Activated T-helper 1 cell treated with anti-CD3 and anti-CD28 coated beads, Interleukin-12 subunit alpha, Interleukin-12 subunit beta, Interleukin-2, Interleukin-4 antibody, amounts not matched to agents 30 ng/mL and 10 ng/mL and 1 ng/mL, durations not matched to agents 14 hours and 24 hours and 36 hours (primary cell): ENCODE measurements at regions of chr19 and their contacts with region 1.

Region 1: GRCh38 chr19:6501740-6502648 is at the start of gene TUBB4A:
- DNase-seq: peak; percentile 31
- H3K4me3 Mint-ChIP-seq: peak within 1 kb of the TSS; percentile 82
- H3K27ac Mint-ChIP-seq: no peak within 1 kb of the TSS
- H3K4me1 Mint-ChIP-seq: peaks cover 21% of the 10 kb centered on the region
- H3K27me3 Mint-ChIP-seq: peaks cover 18% of the 10 kb centered on the region
- total RNA-seq, gene TUBB4A: 2.3 and 3.0 TPM in 2 replicates

Region 2: DNA sequence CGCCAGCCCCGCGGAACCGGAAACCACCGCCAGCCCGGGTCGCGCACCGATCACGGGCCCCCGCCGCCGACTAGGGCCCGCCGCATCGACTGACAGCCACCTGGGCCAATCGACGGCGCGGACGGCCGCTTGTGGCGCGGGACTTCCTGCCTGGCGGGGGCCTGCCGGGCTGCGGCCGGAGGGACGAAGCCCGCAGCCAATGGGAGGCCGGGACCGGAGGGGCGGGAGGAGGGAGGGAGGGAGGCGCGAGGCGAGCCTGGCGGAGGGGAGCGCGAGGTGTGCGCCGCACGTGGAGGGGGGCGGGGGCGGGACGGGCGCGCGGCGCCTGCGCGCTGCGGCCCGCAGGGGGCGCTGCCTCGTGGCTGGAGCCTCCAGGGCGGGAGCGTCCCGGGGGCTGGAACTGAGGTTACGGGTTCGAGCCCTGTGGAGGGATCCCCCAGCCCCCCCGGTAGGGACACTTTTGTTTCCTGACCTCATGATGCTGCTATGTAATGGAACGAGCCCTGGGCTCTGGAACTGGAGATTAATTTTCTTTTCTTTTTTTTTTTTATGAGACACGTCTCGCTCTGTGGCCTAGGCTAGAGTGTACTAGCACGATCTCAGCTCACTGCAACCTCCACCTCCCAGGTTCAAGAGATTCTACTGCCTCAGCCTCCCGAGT is 221.9 kb before region 1 on chr19 and contains the start of gene MLLT1:
- intact Hi-C with region 1: loop called (anchors 1 kb)
- DNase-seq: peak; percentile 96
- H3K4me3 Mint-ChIP-seq: peak within 1 kb of the TSS; percentile 95
- H3K27ac Mint-ChIP-seq: peak within 1 kb of the TSS; percentile 90
- H3K4me1 Mint-ChIP-seq: peaks cover 26% of the 10 kb centered on the region
- H3K27me3 Mint-ChIP-seq: no peaks in the 10 kb centered on the region
- total RNA-seq, gene MLLT1: 71.6 and 77.4 TPM in 2 replicates

Region 3: DNA sequence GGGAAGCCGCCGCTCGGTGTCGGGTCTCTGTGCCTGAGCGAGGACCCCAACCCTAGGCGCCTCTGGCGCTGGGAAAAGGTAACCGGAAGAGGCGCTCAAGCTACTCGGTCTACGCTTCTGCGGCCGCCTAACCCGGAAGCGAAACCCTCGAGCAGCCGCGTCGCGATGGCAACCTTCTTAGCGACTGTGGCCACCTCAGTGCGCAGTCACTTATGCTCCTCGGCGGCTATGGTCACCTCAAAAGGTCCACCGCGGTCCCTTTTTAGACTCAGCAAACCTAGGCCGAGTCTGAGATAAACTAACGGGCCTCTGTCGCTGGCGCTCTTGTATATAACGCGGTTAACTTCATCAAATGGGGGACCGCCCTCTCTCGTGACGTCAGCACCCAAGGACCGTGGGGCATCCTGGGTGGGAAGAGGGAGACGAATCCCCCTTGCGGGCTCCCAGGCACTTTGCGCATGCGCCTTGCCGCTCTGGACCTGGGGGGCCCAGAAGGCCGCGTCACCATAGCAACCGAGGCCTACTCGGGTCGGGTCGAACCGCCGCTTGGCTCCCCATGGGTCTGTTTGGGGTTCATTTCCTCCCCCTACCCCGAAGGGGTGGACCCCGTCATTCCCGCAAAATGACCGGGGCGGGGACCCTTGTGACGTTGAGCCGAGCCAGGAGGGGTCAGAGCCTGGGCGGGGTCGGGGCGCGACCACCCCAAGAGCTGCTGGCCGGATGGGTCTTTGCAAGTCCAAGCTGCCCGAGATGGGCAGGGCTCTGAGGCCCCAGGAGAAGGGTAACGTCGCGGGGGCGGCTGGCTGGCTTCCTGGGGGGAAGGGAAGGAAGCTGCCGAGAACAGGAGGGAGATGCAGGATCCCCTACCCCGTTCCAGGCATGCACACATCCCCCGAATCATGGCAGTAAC is 108.7 kb before region 1 on chr19 and contains the start of gene GTF2F1:
- intact Hi-C with region 1: loop called (anchors 2 kb)
- DNase-seq: peak; percentile 87
- H3K4me3 Mint-ChIP-seq: peak within 1 kb of the TSS; percentile 98
- H3K27ac Mint-ChIP-seq: peak within 1 kb of the TSS; percentile 97
- H3K4me1 Mint-ChIP-seq: peaks cover 29% of the 10 kb centered on the region
- H3K27me3 Mint-ChIP-seq: no peaks in the 10 kb centered on the region
- total RNA-seq, gene GTF2F1: 62.9 and 65.5 TPM in 2 replicates

Region 4: GRCh38 chr19:6453951-6454565 is 47.9 kb before region 1 on chr19:
- intact Hi-C with region 1: no loop called
- DNase-seq: no peak
- H3K4me3 Mint-ChIP-seq: no peak overlapping the region
- H3K27ac Mint-ChIP-seq: no peak overlapping the region
- H3K4me1 Mint-ChIP-seq: peaks cover 16% of the 10 kb centered on the region
- H3K27me3 Mint-ChIP-seq: no peaks in the 10 kb centered on the region

Region 5: GRCh38 chr19:6481541-6482342 is 20.3 kb before region 1 on chr19 and contains the start of gene DENND1C:
- intact Hi-C with region 1: loop called (anchors 2 kb)
- DNase-seq: peak; percentile 61
- H3K4me3 Mint-ChIP-seq: peak within 1 kb of the TSS; percentile 91
- H3K27ac Mint-ChIP-seq: peak within 1 kb of the TSS; percentile 89
- H3K4me1 Mint-ChIP-seq: peaks cover 23% of the 10 kb centered on the region
- H3K27me3 Mint-ChIP-seq: no peaks in the 10 kb centered on the region
- total RNA-seq, gene DENND1C: 68.4 and 75.6 TPM in 2 replicates

Region 6: GRCh38 chr19:6521718-6522646 is 20.0 kb after region 1 on chr19:
- intact Hi-C with region 1: no loop called
- DNase-seq: no peak
- H3K4me3 Mint-ChIP-seq: no peak overlapping the region
- H3K27ac Mint-ChIP-seq: peak overlapping the region; percentile 27
- H3K4me1 Mint-ChIP-seq: peaks cover 33% of the 10 kb centered on the region
- H3K27me3 Mint-ChIP-seq: peaks cover 2% of the 10 kb centered on the region